ENCODE measurements at regions of chr2 and their contacts with region 1.

Region 1: DNA sequence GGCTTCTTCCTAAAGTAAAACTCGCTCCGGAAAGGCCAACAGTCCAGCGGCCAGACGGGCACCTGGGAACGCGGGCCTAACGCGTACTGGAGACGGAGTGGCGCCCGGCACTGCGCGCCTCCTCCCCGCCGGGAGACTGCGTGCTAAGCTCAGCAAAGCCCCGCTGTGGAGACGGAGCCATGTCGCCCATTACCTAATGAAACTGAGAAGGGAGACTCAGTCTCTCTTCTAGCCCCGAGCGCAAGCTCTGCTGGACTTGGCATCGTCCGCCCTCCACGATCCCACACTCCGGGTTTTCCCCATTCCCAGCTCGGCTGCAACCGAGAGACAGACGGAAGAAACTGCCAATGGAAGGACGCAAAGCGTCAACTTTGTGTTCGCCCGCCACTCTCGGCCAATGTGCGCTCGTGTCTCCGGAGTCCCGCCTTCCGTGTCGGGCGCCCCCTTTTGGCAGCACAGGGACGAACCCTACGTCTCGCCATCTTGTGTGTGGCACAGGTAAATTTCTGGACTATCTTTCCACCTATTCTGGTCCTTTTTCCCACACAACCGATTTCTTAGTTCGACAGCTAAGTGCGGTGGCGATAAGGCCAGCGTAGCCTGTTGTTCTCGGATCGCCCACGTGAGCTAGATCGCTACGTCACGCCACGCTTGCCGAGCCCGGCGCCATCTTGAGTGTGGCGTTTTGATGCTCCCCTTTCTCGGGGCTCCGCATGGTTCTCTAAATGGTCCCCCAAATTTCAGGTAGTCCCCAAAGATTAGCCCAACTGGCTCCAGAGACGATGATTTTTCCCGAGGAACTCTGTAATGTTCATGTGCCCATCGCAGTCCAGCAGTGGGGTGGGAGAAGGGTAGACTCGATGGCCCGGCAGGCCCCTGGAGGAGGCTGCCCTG is 1.3 kb upstream of the PTMA start:
- DNase-seq: peak; percentile 98
- ATAC-seq: peak; percentile 57
- H3K4me3 ChIP-seq: peak overlapping the region; percentile 85 to 94
- H3K27ac ChIP-seq: peak overlapping the region; percentile 99
- H3K4me1 ChIP-seq: peaks cover 20 to 44% of the 10 kb centered on the region in 2 experiments
- H3K27me3 ChIP-seq: no peaks in the 10 kb centered on the region
- CTCF ChIP-seq: peak in 2 of 3 experiments; percentile 88 to 96; a peak in 4 of 6 replicates
- POLR2A ChIP-seq: no peak
- RAD21 ChIP-seq: no peak

Region 2: GRCh38 chr2:231394211-231395141 is 312.5 kb before region 1 on chr2:
- CTCF ChIA-PET with region 1: no interaction called
- POLR2A ChIA-PET with region 1: no interaction called
- RAD21 ChIA-PET with region 1: no interaction called
- intact Hi-C with region 1: no loop called
- DNase-seq: no peak
- ATAC-seq: peak; percentile 29; the same call in 1 of the 2 replicates
- H3K4me3 ChIP-seq: peak overlapping the region; percentile 52 to 62
- H3K27ac ChIP-seq: no peak overlapping the region; the same call in 1 of the 2 replicates
- H3K4me1 ChIP-seq: peaks cover 10 to 26% of the 10 kb centered on the region in 2 experiments
- H3K27me3 ChIP-seq: no peaks in the 10 kb centered on the region
- CTCF ChIP-seq: peak; percentile 20 to 51 (median 42); a peak in 4 of 6 replicates
- POLR2A ChIP-seq: no peak
- RAD21 ChIP-seq: peak; percentile 28; the same call in 1 of the 2 replicates

Region 3: GRCh38 chr2:231463698-231464575 is 243.0 kb before region 1 on chr2 and contains the start of gene NCL:
- CTCF ChIA-PET with region 1: no interaction called
- POLR2A ChIA-PET with region 1: interaction called, 3 read pairs
- RAD21 ChIA-PET with region 1: no interaction called
- intact Hi-C with region 1: loop called (anchors 5 kb)
- DNase-seq: peak; percentile 54
- ATAC-seq: peak; percentile 92
- H3K4me3 ChIP-seq: peak within 1 kb of the TSS; percentile 79 to 93
- H3K27ac ChIP-seq: peak within 1 kb of the TSS; percentile 98
- H3K4me1 ChIP-seq: peaks cover 7 to 25% of the 10 kb centered on the region in 2 experiments
- H3K27me3 ChIP-seq: no peaks in the 10 kb centered on the region
- CTCF ChIP-seq: no peak
- POLR2A ChIP-seq: peak; percentile 97
- RAD21 ChIP-seq: no peak
- total RNA-seq, gene NCL: 1,077 TPM

Region 4: DNA sequence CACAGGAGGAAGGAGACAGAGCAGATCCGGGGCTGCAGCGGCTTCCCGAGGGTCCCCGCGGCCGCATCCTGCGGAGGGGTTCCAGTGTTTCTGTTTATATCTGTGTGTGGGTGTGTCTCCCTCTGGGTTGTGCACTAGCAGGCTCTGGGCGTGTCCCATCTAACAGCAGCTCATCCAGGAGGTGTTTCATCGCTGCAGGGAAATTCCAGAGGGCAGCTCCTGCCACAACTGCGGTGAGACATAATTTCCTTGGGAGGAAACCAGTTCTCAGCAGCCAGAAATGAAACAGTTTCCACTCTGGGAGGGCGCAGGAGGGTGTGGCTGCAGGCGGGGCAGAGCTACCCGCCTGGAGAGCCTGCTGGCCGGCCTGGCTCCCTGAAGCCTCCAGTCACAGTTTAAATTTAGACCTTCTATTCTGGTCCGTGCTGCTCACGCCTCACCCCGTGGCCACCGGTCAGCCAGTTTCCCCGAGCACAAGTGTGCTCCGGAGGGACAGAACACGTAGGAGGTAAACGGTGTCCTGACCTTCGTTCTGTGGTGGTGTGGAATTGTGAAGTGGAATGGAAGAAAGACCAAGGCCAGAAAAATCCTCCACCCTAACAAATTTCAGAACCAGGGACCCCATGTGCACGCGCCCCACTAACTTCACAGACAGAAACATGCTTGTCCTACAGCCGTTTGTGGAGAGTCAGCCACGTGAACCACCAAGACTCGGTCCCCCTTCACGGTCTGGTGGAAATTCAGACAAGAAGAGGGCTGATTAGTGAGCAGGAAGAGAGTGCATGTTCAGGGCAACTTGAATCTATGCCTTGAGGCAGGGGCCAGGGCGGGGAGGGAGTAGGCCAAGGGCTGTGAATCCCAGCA is 64.1 kb before region 1 on chr2:
- CTCF ChIA-PET with region 1: interaction called, 5 read pairs
- POLR2A ChIA-PET with region 1: interaction called, 7 read pairs
- RAD21 ChIA-PET with region 1: no interaction called
- intact Hi-C with region 1: loop called (anchors 2 kb)
- DNase-seq: peak; percentile 99
- ATAC-seq: peak; percentile 82
- H3K4me3 ChIP-seq: peak overlapping the region; percentile 36 to 46
- H3K27ac ChIP-seq: peak overlapping the region; percentile 100
- H3K4me1 ChIP-seq: peaks cover 49 to 74% of the 10 kb centered on the region in 2 experiments
- H3K27me3 ChIP-seq: no peaks in the 10 kb centered on the region
- CTCF ChIP-seq: no peak
- POLR2A ChIP-seq: peak; percentile 64
- RAD21 ChIP-seq: no peak

Region 5: GRCh38 chr2:231662028-231662810 is 44.8 kb before region 1 on chr2:
- CTCF ChIA-PET with region 1: interaction called, 9 read pairs
- POLR2A ChIA-PET with region 1: interaction called, 22 read pairs
- RAD21 ChIA-PET with region 1: interaction called in 1 of 2 experiments, 6 read pairs
- intact Hi-C with region 1: loop called (anchors 1 kb)
- DNase-seq: peak; percentile 97
- ATAC-seq: peak; percentile 58
- H3K4me3 ChIP-seq: peak overlapping the region; percentile 56 to 62
- H3K27ac ChIP-seq: peak overlapping the region; percentile 99
- H3K4me1 ChIP-seq: peaks cover 25 to 75% of the 10 kb centered on the region in 2 experiments
- H3K27me3 ChIP-seq: no peaks in the 10 kb centered on the region
- CTCF ChIP-seq: no peak
- POLR2A ChIP-seq: no peak
- RAD21 ChIP-seq: no peak

Region 6: GRCh38 chr2:231680992-231681853 is 25.8 kb before region 1 on chr2:
- CTCF ChIA-PET with region 1: interaction called, 13 read pairs
- POLR2A ChIA-PET with region 1: interaction called, 15 read pairs
- RAD21 ChIA-PET with region 1: no interaction called
- intact Hi-C with region 1: loop called (anchors 2 kb)
- DNase-seq: no peak
- ATAC-seq: peak; percentile 75
- H3K4me3 ChIP-seq: peak overlapping the region; percentile 61 to 70
- H3K27ac ChIP-seq: peak overlapping the region; percentile 100
- H3K4me1 ChIP-seq: peaks cover 31 to 69% of the 10 kb centered on the region in 2 experiments
- H3K27me3 ChIP-seq: no peaks in the 10 kb centered on the region
- CTCF ChIP-seq: no peak
- POLR2A ChIP-seq: peak; percentile 67
- RAD21 ChIP-seq: no peak

Measured in HCT116 (cell line).